CD4-positive, alpha-beta T cell (primary cell): ENCODE measurements at regions of chr14 and their contacts with region 1.

Region 1: DNA sequence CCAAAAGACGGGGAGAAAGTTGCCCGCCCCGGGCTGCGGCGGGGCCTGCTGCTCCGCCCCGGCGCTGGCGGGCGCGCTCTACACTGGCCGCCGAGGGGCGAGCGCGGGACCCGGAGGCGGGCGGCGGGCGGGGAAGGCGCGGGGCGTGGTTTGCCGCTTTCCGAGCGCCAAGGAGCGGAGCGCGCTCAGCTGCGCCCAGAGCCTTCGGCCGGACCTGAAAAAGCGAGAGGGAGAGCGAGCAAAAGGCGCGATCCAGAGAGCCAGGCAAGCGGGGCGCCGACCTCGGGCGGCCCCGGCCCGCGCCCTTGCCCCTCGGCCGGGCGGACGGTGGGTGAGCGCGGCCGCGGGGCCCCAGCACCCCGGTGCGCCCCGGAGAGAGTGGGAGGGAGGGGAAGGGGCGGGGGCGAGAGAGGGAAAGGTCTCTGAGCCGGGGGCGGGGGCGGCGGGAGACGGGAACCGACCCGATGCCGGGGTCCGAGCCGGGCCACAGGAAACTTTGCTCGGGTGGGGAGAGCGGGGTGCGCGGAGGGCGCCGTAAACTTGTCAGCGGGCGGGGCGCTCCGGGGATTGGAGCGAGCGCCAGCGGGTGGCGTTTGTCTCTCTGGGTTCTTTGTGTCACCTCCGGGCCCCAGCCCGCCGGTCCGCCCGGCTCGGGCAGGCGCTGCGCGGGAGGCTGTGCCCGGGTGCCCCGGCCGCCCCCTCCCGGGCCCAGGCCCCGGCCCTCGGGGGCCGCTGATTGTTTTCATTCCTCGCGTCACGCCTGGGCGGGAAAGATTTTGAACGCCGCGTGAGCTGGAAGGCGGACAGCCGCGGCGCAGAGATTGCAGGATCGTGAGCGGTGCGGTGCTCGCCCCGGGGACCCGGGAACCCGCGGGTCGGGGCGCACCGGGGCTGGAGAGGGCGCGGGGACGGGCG is at the start of gene SYNE2:
- DNase-seq: peak; percentile 65 to 91 (median 81)
- ATAC-seq: peak; percentile 80
- H3K4me3 ChIP-seq: peak within 1 kb of the TSS; percentile 68
- H3K4me3 Mint-ChIP-seq: peak within 1 kb of the TSS; percentile 100
- H3K27ac ChIP-seq: peak within 1 kb of the TSS; percentile 25 to 71
- H3K27ac Mint-ChIP-seq: peak within 1 kb of the TSS; percentile 96
- H3K4me1 ChIP-seq: peaks cover 37% of the 10 kb centered on the region
- H3K4me1 Mint-ChIP-seq: peaks cover 43% of the 10 kb centered on the region
- H3K27me3 ChIP-seq: no peaks in the 10 kb centered on the region
- H3K27me3 Mint-ChIP-seq: no peaks in the 10 kb centered on the region
- CTCF ChIP-seq: no peak
- total RNA-seq, gene SYNE2: 87.4 to 92.6 TPM

Region 2: GRCh38 chr14:62144863-62145262 is 1708.2 kb before region 1 on chr14:
- CTCF ChIA-PET with region 1: no interaction called
- POLR2A ChIA-PET with region 1: no interaction called
- intact Hi-C with region 1: no loop called
- DNase-seq: no peak
- ATAC-seq: no peak
- H3K4me3 ChIP-seq: no peak overlapping the region
- H3K4me3 Mint-ChIP-seq: no peak overlapping the region
- H3K27ac ChIP-seq: no peak overlapping the region
- H3K27ac Mint-ChIP-seq: no peak overlapping the region
- H3K4me1 ChIP-seq: no peaks in the 10 kb centered on the region
- H3K4me1 Mint-ChIP-seq: no peaks in the 10 kb centered on the region
- H3K27me3 ChIP-seq: no peaks in the 10 kb centered on the region
- H3K27me3 Mint-ChIP-seq: peaks cover 45% of the 10 kb centered on the region
- CTCF ChIP-seq: no peak

Region 3: DNA sequence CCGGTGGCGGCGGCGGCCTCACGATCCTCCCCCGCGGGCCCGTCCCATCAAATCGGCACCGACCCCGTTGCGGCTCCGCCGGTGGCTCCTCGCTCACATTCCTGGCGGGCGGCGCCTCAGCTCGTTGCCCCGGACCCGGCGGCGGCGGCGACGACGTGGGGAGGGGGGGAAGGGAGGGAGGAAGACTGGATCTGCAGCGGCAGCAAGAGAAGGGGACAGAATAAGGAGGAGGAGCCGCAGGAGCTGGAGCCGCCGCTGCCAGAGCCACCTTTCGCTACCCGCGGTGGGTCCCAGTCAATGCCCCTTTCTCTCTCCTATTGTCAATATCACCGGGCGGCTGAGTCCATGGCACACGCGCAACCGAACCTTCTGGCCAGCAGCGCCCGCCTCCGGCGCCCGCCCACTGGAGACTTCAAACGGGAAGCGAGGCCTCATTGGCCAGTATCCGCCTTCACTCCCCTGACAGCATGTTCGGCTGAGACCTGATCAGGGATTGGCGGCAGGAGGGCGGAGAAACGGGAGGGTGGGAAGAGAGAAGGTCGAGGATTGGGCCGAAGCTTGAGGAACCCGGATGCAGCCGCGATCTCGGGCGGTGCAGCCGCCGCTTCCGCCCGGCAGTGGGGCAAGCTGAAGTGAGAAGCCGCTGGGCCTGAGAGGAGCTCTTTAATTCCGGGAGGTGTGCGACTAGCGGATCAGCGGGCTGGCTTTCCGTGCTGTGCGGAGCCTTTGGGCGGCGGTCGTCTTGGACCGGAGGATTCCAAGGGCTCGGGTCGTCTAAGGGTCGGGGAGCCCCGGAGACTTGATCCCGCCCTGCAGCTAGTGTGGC is 309.9 kb before region 1 on chr14 and contains the start of gene PPP2R5E:
- CTCF ChIA-PET with region 1: no interaction called
- POLR2A ChIA-PET with region 1: no interaction called
- intact Hi-C with region 1: loop called in 1 of 2 experiments (anchors 5 kb)
- DNase-seq: peak; percentile 94 to 99 (median 96)
- ATAC-seq: peak; percentile 96
- H3K4me3 ChIP-seq: peak within 1 kb of the TSS; percentile 99
- H3K4me3 Mint-ChIP-seq: peak within 1 kb of the TSS; percentile 98
- H3K27ac ChIP-seq: peak within 1 kb of the TSS; percentile 79 to 82
- H3K27ac Mint-ChIP-seq: peak within 1 kb of the TSS; percentile 90
- H3K4me1 ChIP-seq: peaks cover 18% of the 10 kb centered on the region
- H3K4me1 Mint-ChIP-seq: peaks cover 46% of the 10 kb centered on the region
- H3K27me3 ChIP-seq: no peaks in the 10 kb centered on the region
- H3K27me3 Mint-ChIP-seq: no peaks in the 10 kb centered on the region
- CTCF ChIP-seq: no peak
- total RNA-seq, gene PPP2R5E: 31.2 to 32.3 TPM

Region 4: GRCh38 chr14:63727774-63728728 is 125.0 kb before region 1 on chr14 and contains the start of gene SGPP1:
- CTCF ChIA-PET with region 1: no interaction called
- POLR2A ChIA-PET with region 1: no interaction called
- intact Hi-C with region 1: loop called in 1 of 2 experiments (anchors 5 kb)
- DNase-seq: peak; percentile 60 to 92 (median 76)
- ATAC-seq: peak; percentile 88
- H3K4me3 ChIP-seq: peak within 1 kb of the TSS; percentile 96
- H3K4me3 Mint-ChIP-seq: peak within 1 kb of the TSS; percentile 93
- H3K27ac ChIP-seq: peak within 1 kb of the TSS; percentile 58 to 65
- H3K27ac Mint-ChIP-seq: peak within 1 kb of the TSS; percentile 93
- H3K4me1 ChIP-seq: peaks cover 20% of the 10 kb centered on the region
- H3K4me1 Mint-ChIP-seq: peaks cover 42% of the 10 kb centered on the region
- H3K27me3 ChIP-seq: no peaks in the 10 kb centered on the region
- H3K27me3 Mint-ChIP-seq: no peaks in the 10 kb centered on the region
- CTCF ChIP-seq: peak; percentile 54
- total RNA-seq, gene SGPP1: 16.6 to 16.8 TPM

Region 5: DNA sequence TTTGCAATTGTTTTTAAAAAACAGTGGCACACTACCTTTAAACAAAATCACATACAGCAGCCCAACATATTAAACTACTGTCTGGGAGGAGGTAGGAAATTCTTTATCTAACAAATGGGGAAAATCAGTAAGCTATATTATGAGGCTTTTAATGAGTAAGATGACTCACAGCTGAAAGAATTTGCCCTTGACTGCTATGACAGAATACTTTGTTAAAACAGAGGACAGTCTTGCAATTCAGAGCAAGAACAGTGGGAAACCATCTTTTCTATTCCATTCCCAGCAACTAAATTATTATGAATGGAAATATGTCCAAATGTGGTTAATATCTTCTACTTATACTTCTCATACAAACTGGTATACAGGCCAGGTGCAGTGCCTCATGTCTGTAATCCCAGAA is 76.0 kb before region 1 on chr14:
- CTCF ChIA-PET with region 1: no interaction called
- POLR2A ChIA-PET with region 1: no interaction called
- intact Hi-C with region 1: no loop called
- DNase-seq: no peak
- ATAC-seq: no peak
- H3K4me3 ChIP-seq: no peak overlapping the region
- H3K4me3 Mint-ChIP-seq: no peak overlapping the region
- H3K27ac ChIP-seq: no peak overlapping the region
- H3K27ac Mint-ChIP-seq: no peak overlapping the region
- H3K4me1 ChIP-seq: no peaks in the 10 kb centered on the region
- H3K4me1 Mint-ChIP-seq: no peaks in the 10 kb centered on the region
- H3K27me3 ChIP-seq: no peaks in the 10 kb centered on the region
- H3K27me3 Mint-ChIP-seq: no peaks in the 10 kb centered on the region
- CTCF ChIP-seq: no peak

Region 6: DNA sequence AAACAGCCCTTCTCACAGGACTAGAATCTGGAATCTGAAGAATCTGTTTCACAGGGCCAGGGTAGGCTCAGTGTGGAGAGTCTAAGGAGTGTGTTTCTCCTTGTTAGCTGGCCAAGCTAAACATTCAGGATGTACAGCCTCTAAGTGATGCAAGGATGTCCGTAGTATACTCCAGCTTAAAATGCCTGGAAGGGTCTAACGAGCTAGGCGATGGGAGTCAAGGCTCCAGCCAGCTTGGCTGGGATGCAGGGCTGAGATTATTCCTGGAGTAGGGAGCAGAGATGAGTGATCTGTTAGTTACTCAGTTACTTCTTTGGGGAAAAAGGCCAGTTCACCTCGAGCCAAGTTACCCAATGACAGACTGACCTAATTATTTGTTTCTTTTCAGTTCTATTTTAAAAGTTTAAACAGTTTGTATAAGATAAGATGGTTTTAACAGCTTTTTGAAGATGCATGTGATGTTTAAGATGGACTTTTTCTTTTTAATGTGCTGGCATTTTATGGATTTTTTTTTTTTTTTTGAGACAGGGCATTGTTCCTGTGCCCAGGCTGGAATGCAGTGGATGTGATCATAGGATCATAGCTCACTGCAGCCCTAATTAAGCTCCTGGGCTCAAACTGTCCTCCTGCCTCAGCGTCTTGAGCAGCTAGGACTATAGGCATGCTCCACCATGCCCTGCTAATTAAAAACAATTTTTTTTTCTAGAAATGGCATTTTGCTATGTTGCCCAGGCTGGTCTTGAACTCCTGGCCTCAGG is 40.8 kb after region 1 on chr14:
- CTCF ChIA-PET with region 1: interaction called, 4 read pairs
- POLR2A ChIA-PET with region 1: interaction called, 4 read pairs
- intact Hi-C with region 1: loop called in 1 of 2 experiments (anchors 5 kb)
- DNase-seq: no peak
- ATAC-seq: no peak
- H3K4me3 ChIP-seq: no peak overlapping the region
- H3K4me3 Mint-ChIP-seq: no peak overlapping the region
- H3K27ac ChIP-seq: no peak overlapping the region
- H3K27ac Mint-ChIP-seq: no peak overlapping the region
- H3K4me1 ChIP-seq: no peaks in the 10 kb centered on the region
- H3K4me1 Mint-ChIP-seq: peaks cover 29% of the 10 kb centered on the region
- H3K27me3 ChIP-seq: no peaks in the 10 kb centered on the region
- H3K27me3 Mint-ChIP-seq: no peaks in the 10 kb centered on the region
- CTCF ChIP-seq: no peak

Region 7: GRCh38 chr14:63933110-63933509 is 80.0 kb after region 1 on chr14:
- CTCF ChIA-PET with region 1: interaction called, 6 read pairs
- POLR2A ChIA-PET with region 1: interaction called, 14 read pairs
- intact Hi-C with region 1: loop called (anchors 2 to 5 kb)
- DNase-seq: peak in 3 of 14 experiments; percentile 22 to 62 (median 33)
- ATAC-seq: no peak
- H3K4me3 ChIP-seq: peak overlapping the region; percentile 40
- H3K4me3 Mint-ChIP-seq: peak overlapping the region; percentile 20
- H3K27ac ChIP-seq: peak overlapping the region in 1 of 2 donors; percentile 38
- H3K27ac Mint-ChIP-seq: peak overlapping the region; percentile 35
- H3K4me1 ChIP-seq: peaks cover 28% of the 10 kb centered on the region
- H3K4me1 Mint-ChIP-seq: peaks cover 23% of the 10 kb centered on the region
- H3K27me3 ChIP-seq: no peaks in the 10 kb centered on the region
- H3K27me3 Mint-ChIP-seq: no peaks in the 10 kb centered on the region
- CTCF ChIP-seq: no peak

Region 8: GRCh38 chr14:63952933-63953437 is 99.9 kb after region 1 on chr14:
- CTCF ChIA-PET with region 1: interaction called, 7 read pairs
- POLR2A ChIA-PET with region 1: no interaction called
- intact Hi-C with region 1: loop called in 1 of 2 experiments (anchors 5 kb)
- DNase-seq: no peak
- ATAC-seq: no peak
- H3K4me3 ChIP-seq: no peak overlapping the region
- H3K4me3 Mint-ChIP-seq: no peak overlapping the region
- H3K27ac ChIP-seq: no peak overlapping the region
- H3K27ac Mint-ChIP-seq: peak overlapping the region; percentile 13
- H3K4me1 ChIP-seq: peaks cover 4% of the 10 kb centered on the region
- H3K4me1 Mint-ChIP-seq: peaks cover 5% of the 10 kb centered on the region
- H3K27me3 ChIP-seq: no peaks in the 10 kb centered on the region
- H3K27me3 Mint-ChIP-seq: no peaks in the 10 kb centered on the region
- CTCF ChIP-seq: no peak